Activated CD8-positive, alpha-beta T cell treated with anti-CD3 and anti-CD28 coated beads for 36 hours (primary cell): ENCODE measurements at regions of chr17 and their contacts with region 1.

Region 1: GRCh38 chr17:43393944-43394482 is 4.8 kb upstream of the ARL4D start:
- DNase-seq: peak; percentile 97
- ATAC-seq: peak; percentile 41
- H3K4me3 Mint-ChIP-seq: no peak overlapping the region
- H3K27ac Mint-ChIP-seq: peak overlapping the region; percentile 20
- H3K4me1 Mint-ChIP-seq: peaks cover 15% of the 10 kb centered on the region
- H3K27me3 Mint-ChIP-seq: no peaks in the 10 kb centered on the region
- CTCF ChIP-seq: peak; percentile 87

Region 2: DNA sequence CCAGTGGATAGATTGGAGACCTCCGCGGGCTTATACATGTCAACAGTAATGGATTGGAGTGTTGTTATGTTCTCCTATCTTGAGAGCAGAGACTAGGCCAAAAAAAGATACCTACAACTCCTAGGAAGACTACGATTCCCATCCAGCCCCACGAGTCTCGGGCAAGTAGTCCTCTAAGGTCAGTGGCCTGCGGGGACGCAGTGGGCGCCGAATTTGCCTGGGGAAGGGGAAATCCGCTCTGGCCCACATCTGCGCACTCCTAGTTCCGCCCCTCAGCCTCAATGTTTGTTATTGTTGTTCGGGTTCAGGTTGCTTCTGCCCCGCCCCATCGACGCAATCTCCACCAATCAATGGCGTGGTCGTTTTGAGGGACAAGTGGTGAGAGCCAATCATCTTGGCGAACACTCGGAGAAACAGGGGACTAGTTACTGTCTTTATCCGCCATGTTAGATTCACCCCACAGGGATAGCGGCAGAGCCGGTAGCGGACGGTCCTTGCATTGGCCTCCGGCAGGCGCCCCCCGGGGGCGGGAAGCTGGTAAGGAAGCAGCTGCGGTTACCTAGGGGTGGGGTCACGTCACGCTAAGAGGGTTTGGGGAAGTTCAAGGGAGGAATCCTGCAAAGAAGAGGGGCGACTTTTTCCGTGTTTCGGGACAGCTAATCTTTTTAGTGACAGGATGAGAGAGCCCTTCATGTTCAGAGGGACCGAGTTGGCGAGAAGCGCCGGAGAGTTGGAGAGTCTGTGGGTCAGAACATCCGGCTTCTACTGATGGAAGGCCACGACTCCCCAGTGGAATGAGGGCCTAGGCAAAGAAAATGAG is 223.0 kb before region 1 on chr17 and contains the start of gene NBR1:
- CTCF ChIA-PET with region 1: no interaction called
- POLR2A ChIA-PET with region 1: no interaction called
- intact Hi-C with region 1: no loop called
- DNase-seq: peak; percentile 99
- ATAC-seq: peak; percentile 85
- H3K4me3 Mint-ChIP-seq: no peak within 1 kb of the TSS
- H3K27ac Mint-ChIP-seq: no peak within 1 kb of the TSS
- H3K4me1 Mint-ChIP-seq: peaks cover 33% of the 10 kb centered on the region
- H3K27me3 Mint-ChIP-seq: no peaks in the 10 kb centered on the region
- CTCF ChIP-seq: no peak
- total RNA-seq, gene NBR1: 45.6 to 46.5 TPM

Region 3: DNA sequence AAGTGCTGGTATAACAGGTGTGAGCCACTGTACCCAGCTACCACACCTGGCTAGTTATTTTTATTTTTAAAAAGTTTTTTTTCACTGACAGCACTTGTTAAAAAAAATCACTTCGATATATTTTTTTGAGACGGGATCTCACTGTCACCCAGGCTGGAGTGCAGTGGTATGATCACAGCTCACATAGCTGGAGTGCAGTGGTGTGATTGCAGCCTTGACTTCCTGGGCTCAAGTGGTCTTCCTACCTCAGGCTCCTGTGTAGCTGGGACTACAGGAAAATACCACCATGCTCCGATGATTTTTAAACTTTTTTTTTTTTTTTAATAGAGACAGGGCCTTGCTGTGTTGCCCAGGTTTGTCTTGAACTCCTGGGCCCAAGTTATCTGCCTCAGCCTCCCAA is 210.1 kb before region 1 on chr17:
- CTCF ChIA-PET with region 1: no interaction called
- POLR2A ChIA-PET with region 1: no interaction called
- intact Hi-C with region 1: no loop called
- DNase-seq: no peak
- ATAC-seq: no peak
- H3K4me3 Mint-ChIP-seq: no peak overlapping the region
- H3K27ac Mint-ChIP-seq: no peak overlapping the region
- H3K4me1 Mint-ChIP-seq: peaks cover 2% of the 10 kb centered on the region
- H3K27me3 Mint-ChIP-seq: no peaks in the 10 kb centered on the region
- CTCF ChIP-seq: no peak

Region 4: DNA sequence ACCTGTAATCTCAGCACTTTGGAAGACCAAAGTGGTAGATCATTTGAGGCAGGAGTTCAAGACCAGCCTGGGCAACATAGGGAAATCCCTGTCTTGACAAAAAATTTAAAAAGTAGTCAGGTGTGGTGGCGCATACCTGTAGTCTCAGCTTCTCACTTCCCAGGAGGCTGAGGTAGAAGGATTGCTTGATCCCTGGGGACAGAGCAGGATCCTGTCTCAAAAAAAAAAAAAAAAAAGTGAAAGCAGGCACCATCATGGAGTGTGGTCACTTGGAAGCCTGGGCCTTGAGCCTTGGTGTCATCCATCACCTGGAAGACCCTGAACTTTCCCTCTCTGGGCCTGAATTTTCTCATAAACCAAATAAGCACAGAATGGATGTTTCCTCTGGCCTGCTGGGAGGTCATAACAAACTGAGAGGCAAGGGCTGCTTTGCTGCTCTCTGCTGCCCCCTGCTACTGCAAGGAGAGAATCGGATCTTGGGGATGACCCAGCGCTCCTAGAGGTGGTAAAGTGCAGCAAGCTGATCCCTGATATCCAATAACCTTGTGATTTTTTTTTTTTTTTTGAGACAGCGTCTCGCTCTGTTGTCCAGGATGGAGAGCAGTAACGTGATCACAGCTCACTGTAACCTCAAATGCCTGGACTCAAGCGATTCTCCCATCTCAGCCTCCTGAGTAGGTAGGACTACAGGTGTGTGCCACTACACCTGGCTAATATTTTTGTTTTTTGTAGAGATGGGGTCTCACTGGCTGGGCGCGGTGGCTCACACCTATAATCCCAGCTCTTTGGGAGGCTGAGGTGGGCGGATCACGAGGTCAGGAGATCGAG is 84.3 kb before region 1 on chr17:
- CTCF ChIA-PET with region 1: no interaction called
- POLR2A ChIA-PET with region 1: no interaction called
- intact Hi-C with region 1: no loop called
- DNase-seq: no peak
- ATAC-seq: no peak
- H3K4me3 Mint-ChIP-seq: no peak overlapping the region
- H3K27ac Mint-ChIP-seq: no peak overlapping the region
- H3K4me1 Mint-ChIP-seq: peaks cover 9% of the 10 kb centered on the region
- H3K27me3 Mint-ChIP-seq: no peaks in the 10 kb centered on the region
- CTCF ChIP-seq: no peak

Region 5: GRCh38 chr17:43338886-43339516 is 55.0 kb before region 1 on chr17:
- CTCF ChIA-PET with region 1: interaction called, 12 read pairs
- POLR2A ChIA-PET with region 1: interaction called, 5 read pairs
- intact Hi-C with region 1: no loop called
- DNase-seq: peak; percentile 83
- ATAC-seq: no peak
- H3K4me3 Mint-ChIP-seq: no peak overlapping the region
- H3K27ac Mint-ChIP-seq: no peak overlapping the region
- H3K4me1 Mint-ChIP-seq: peaks cover 41% of the 10 kb centered on the region
- H3K27me3 Mint-ChIP-seq: no peaks in the 10 kb centered on the region
- CTCF ChIP-seq: peak; percentile 88

Region 6: DNA sequence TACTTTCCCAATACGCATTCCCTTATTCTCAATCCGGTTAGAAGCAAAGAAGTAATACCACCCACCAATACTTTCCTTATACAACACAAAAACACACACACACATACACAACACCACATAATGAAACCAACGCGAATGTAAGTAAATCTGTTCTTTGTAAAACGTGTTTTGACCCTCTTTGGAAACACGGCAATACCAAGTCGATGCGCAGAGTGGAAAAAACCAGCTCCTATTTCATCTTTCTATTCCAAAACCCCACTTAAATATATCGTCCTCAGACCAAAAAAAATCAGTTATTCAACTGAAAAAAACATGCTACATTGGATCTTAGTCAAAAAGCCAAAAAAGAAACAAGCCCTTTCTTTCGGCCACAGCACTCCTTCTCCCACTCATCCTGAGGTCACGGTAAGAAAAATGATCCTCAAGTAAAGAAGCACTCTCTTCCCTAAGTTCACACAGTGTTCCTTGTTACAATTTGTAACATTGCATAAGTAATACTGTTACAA is 26.2 kb before region 1 on chr17:
- CTCF ChIA-PET with region 1: interaction called, 30 read pairs
- POLR2A ChIA-PET with region 1: interaction called, 138 read pairs
- intact Hi-C with region 1: loop called (anchors 2 kb)
- DNase-seq: peak; percentile 68
- ATAC-seq: peak; percentile 64
- H3K4me3 Mint-ChIP-seq: peak overlapping the region; percentile 97
- H3K27ac Mint-ChIP-seq: peak overlapping the region; percentile 100
- H3K4me1 Mint-ChIP-seq: peaks cover 47% of the 10 kb centered on the region
- H3K27me3 Mint-ChIP-seq: no peaks in the 10 kb centered on the region
- CTCF ChIP-seq: no peak

Region 7: GRCh38 chr17:43412166-43412565 is 18.2 kb after region 1 on chr17:
- CTCF ChIA-PET with region 1: interaction called, 24 read pairs
- POLR2A ChIA-PET with region 1: interaction called, 4 read pairs
- intact Hi-C with region 1: no loop called
- DNase-seq: no peak
- ATAC-seq: no peak
- H3K4me3 Mint-ChIP-seq: no peak overlapping the region
- H3K27ac Mint-ChIP-seq: no peak overlapping the region
- H3K4me1 Mint-ChIP-seq: no peaks in the 10 kb centered on the region
- H3K27me3 Mint-ChIP-seq: peaks cover 7% of the 10 kb centered on the region
- CTCF ChIP-seq: no peak

Region 8: DNA sequence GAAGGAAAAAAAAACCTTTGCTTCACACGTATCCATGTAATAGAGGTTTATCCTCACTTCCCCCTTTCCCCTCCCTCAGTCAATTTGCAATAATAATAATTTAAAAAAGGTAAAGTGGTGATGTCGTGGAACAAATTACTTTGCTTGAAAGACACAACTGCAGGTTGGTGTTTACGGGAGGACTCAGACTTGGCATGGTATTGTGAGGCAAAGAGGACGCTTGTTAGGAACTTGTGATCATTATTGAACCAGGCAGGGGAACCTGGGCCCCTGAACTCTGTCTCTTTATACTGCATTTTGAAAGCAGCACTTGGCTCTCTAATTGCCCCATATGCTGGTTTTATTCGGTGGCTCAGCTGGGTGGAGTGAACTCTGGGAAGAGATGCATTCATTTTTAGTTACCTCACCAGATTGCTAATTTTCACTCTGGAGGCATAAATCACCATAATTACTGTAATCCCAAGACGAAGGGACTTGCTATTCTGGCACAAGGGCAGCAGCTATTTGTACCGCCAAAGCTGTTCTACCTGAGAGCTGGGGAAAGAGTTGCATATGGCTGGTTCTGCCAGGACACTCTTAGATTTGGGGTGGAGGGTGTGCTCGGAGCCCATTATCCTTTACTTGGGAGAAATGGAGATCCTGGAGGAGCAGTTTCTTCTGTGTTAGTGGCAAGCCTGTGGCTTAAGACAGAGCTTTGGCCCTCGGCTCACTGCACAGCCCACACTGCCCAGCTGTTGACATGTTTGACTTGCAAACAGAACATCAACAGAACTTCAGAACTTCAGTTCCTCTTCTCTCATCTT is 84.0 kb after region 1 on chr17:
- CTCF ChIA-PET with region 1: interaction called, 338 read pairs
- POLR2A ChIA-PET with region 1: interaction called, 54 read pairs
- intact Hi-C with region 1: loop called (anchors 1 kb)
- DNase-seq: no peak
- ATAC-seq: no peak
- H3K4me3 Mint-ChIP-seq: no peak overlapping the region
- H3K27ac Mint-ChIP-seq: no peak overlapping the region
- H3K4me1 Mint-ChIP-seq: no peaks in the 10 kb centered on the region
- H3K27me3 Mint-ChIP-seq: peaks cover 1% of the 10 kb centered on the region
- CTCF ChIP-seq: no peak